OCI-LY7 (cell line): ENCODE measurements at regions of chr9 and their contacts with region 1.

Region 1: DNA sequence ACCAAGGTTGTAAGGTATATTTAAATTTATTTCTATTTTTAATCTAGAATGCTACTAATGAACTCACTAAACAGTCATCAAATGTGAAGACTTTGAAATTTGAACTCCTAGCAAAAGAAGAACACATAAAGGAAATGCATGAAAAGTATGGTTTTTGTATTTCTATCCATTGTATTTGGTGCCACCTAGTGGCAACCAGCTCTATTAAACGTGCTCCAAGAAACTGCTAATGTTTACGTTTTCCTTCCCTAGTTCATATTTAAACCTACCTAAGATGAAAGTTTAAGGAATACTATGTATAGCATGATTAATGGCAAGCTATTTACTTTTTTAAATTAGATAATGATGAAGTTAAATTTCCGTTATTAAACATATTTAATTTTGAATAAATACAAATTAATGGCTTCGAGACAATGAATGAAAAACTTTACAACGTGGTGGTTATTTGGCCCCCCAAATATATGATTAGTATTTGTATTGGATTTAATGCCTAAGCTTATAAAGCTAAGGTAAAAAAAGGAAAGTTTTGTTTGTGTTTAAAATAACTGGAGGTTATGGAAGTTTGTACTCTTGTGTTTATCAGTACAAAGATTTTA is 115.9 kb upstream of the SH3GL2 start:
- DNase-seq: peak; percentile 55
- H3K4me3 ChIP-seq: no peak overlapping the region
- H3K27ac ChIP-seq: no peak overlapping the region
- H3K4me1 ChIP-seq: no peaks in the 10 kb centered on the region
- CTCF ChIP-seq: peak; percentile 91

Region 2: DNA sequence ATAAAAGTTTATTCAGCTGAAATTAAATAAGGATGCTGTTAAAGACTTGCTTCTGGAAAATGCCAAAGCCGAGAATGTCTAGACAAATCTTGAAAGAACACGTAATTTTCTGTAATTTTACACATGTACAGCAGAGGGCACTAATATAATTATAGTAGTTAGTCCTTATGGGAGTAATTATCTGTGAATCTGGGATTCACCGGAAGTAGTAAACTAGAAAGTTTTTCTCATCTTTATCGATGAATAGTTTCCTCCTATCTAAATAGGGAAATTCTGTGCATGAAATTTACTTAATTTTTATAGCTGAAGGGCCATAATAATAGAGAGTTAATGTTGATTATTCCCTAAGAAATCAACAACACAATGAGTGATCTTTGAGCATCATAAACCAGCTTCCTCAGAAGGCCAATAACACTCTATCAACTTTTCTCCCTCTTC is 346.5 kb before region 1 on chr9:
- CTCF ChIA-PET with region 1: no interaction called
- POLR2A ChIA-PET with region 1: no interaction called
- intact Hi-C with region 1: loop called (anchors 2 kb)
- DNase-seq: peak; percentile 24
- H3K4me3 ChIP-seq: no peak overlapping the region
- H3K27ac ChIP-seq: no peak overlapping the region
- H3K4me1 ChIP-seq: no peaks in the 10 kb centered on the region
- CTCF ChIP-seq: peak; percentile 79

Region 3: DNA sequence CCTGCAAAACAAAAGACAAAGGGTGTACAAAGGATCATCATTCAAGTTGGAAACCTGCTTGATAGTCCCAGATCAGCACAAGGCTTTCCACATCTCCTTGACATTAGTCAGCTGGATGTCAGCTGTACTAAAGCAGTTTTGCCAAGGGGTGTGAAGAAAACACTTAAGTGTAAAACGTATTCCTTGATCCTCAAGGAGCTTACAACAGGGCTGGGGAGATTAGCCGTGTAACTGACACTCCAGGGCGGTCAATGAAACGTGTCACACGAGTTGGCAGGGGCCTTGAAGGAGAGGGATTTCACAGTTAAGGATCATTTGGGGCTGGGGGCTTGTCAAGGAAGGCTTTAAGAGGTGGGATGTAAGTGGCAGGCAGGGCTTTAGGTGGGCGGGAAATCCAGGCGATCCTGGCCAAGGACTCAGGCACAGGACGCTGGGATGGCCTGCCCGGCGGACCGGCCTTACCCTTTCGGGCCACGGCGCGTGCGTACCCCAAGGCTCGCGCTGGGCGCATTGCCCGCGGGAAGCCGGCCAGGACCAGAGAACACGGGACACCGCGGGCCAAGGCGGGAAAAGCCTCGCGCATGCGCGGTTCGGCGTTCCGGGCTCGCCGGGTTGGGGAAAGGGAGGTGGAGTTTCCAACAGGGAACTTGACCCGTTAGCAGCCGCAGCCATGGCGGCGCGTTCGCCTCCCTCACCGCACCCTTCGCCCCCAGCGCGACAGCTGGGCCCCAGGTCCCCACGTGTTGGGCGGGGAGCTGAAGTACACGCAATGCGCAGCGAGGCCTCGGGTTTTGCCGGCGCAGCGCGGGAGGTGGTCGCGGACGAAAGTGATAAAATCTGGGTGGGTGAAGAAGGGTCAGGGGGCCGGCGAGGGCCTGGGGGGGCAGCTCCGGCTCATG is 328.3 kb before region 1 on chr9 and contains the start of gene CNTLN:
- CTCF ChIA-PET with region 1: no interaction called
- POLR2A ChIA-PET with region 1: no interaction called
- intact Hi-C with region 1: no loop called
- DNase-seq: no peak
- H3K4me3 ChIP-seq: no peak within 1 kb of the TSS
- H3K27ac ChIP-seq: no peak within 1 kb of the TSS
- H3K4me1 ChIP-seq: no peaks in the 10 kb centered on the region
- CTCF ChIP-seq: no peak
- total RNA-seq, gene CNTLN: not detected in 2 replicates

Region 4: DNA sequence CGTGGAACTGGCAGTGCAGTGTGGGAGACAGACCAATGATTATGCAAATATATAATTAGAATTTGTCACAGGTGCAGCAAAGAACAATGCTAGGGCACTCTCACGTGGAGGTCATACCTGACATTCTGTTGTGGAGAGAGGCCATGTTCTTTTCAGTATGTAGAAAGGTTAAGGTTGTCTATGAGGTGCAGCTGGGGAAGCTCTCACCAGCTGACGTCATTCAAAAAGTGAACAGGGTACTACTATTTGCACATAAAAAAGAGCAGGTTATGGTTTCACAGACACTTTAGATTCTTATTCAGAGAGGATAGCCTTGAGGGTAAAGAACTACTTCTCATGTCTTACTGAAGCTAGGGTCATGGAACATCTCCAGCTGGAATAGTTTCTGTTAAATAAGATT is 135.0 kb after region 1 on chr9:
- CTCF ChIA-PET with region 1: no interaction called
- POLR2A ChIA-PET with region 1: no interaction called
- intact Hi-C with region 1: no loop called
- DNase-seq: no peak
- H3K4me3 ChIP-seq: no peak overlapping the region
- H3K27ac ChIP-seq: no peak overlapping the region
- H3K4me1 ChIP-seq: no peaks in the 10 kb centered on the region
- CTCF ChIP-seq: no peak

Region 5: GRCh38 chr9:17653947-17654465 is 191.0 kb after region 1 on chr9:
- CTCF ChIA-PET with region 1: no interaction called
- POLR2A ChIA-PET with region 1: no interaction called
- intact Hi-C with region 1: no loop called
- DNase-seq: no peak
- H3K4me3 ChIP-seq: no peak overlapping the region
- H3K27ac ChIP-seq: no peak overlapping the region
- H3K4me1 ChIP-seq: no peaks in the 10 kb centered on the region
- CTCF ChIP-seq: no peak